Naive thymus-derived CD4-positive, alpha-beta T cell (primary cell): ENCODE measurements at regions of chr20 and their contacts with region 1.

Region 1: DNA sequence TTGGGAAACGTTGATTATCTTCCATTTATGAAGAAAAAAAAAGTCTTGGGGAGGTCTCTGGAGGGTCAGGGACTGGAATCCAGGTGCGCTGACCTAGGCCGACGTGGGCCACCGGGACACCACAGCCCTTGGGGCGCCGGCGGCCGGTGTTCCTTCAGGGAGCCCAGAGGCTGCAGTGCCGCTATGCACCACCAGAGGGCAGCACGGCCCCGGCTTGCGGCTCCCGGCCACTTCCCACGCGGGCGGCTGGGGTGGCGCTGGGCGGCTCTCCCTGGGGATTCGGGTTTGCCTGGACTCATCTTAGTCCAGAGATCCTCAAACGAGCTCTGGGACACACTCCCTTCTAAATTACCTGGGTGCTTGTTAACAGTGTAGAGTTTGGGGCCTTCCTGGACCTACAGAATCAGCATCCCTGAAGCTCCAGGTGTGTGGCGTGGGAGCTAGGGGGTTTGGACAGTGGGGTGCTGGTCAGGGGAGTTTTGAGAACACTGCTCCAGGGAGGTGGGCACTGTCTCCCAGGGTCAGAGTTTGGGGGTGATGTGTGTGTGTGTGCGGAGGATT is 23.0 kb upstream of the GTSF1L start:
- DNase-seq: peak; percentile 50 to 94 (median 72)
- ATAC-seq: peak; percentile 85
- H3K4me3 ChIP-seq: no peak overlapping the region
- H3K4me3 Mint-ChIP-seq: peak overlapping the region in 6 of 10 donors; percentile 29 to 54 (median 46)
- H3K27ac ChIP-seq: no peak overlapping the region
- H3K27ac Mint-ChIP-seq: peak overlapping the region in 6 of 9 donors; percentile 28 to 81 (median 51)
- H3K4me1 ChIP-seq: peaks cover 15 to 18% of the 10 kb centered on the region in 2 donors
- H3K4me1 Mint-ChIP-seq: peaks cover 22 to 44% (median 38%) of the 10 kb centered on the region in 7 donors
- H3K27me3 ChIP-seq: no peaks in the 10 kb centered on the region
- H3K27me3 Mint-ChIP-seq: peaks cover 0 to 18% (median 0%) of the 10 kb centered on the region in 5 donors

Region 2: DNA sequence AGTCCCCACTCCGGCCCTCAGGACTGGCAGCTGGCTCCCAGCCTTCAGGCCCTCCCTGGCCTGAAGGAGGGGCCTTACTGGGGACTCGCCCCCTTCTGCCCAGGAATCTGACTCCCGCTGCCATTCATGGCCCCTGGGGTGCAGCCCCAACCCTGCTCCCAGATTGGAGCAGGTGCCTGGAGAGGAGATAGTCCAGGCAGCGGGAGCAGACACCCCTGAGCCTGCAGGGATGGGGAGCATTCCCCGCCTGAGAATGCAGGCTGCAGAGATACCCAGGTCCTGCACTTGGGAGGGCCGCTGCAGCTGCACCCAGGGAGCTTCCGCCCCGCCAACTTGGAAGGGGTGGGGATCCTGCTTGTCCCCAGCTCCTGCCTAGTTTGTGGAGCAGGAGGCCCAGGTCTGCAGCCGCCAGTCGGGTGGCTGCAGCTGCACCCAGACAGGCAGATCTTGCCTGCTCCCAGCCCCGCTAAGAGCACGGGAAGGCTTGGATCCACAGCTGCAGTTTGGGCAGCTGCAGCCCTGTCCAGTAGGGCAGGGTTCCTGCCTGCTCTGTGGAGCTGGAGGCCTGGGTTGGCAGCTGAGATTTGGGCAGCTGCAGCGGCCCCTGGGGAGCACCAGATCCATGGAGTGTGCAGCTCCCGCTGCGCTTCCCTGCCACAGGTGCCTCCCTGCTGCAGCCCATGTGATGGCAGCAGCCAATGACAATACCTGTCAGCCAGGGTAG is 28.2 kb before region 1 on chr20:
- CTCF ChIA-PET with region 1: interaction called, 5 read pairs
- POLR2A ChIA-PET with region 1: interaction called, 4 read pairs
- intact Hi-C with region 1: loop called in 1 of 2 experiments (anchors 2 kb)
- DNase-seq: no peak
- ATAC-seq: no peak
- H3K4me3 ChIP-seq: peak overlapping the region; percentile 62
- H3K4me3 Mint-ChIP-seq: peak overlapping the region; percentile 62 to 92 (median 79)
- H3K27ac ChIP-seq: peak overlapping the region; percentile 75
- H3K27ac Mint-ChIP-seq: peak overlapping the region; percentile 65 to 95 (median 88)
- H3K4me1 ChIP-seq: peaks cover 0 to 53% of the 10 kb centered on the region in 2 donors
- H3K4me1 Mint-ChIP-seq: peaks cover 13 to 95% (median 70%) of the 10 kb centered on the region in 7 donors
- H3K27me3 ChIP-seq: no peaks in the 10 kb centered on the region
- H3K27me3 Mint-ChIP-seq: no peaks in the 10 kb centered on the region

Region 3: GRCh38 chr20:43914311-43915210 is 164.7 kb after region 1 on chr20 and contains the start of gene TOX2:
- CTCF ChIA-PET with region 1: interaction called, 3 read pairs
- POLR2A ChIA-PET with region 1: no interaction called
- intact Hi-C with region 1: loop called in 1 of 2 experiments (anchors 5 kb)
- DNase-seq: peak; percentile 12 to 59 (median 42)
- ATAC-seq: peak; percentile 86
- H3K4me3 ChIP-seq: peak within 1 kb of the TSS; percentile 57
- H3K4me3 Mint-ChIP-seq: peak within 1 kb of the TSS; percentile 78 to 97 (median 88)
- H3K27ac ChIP-seq: no peak within 1 kb of the TSS
- H3K27ac Mint-ChIP-seq: peak within 1 kb of the TSS in 8 of 9 donors; percentile 70 to 94 (median 78)
- H3K4me1 ChIP-seq: peaks cover 14 to 16% of the 10 kb centered on the region in 2 donors
- H3K4me1 Mint-ChIP-seq: peaks cover 12 to 28% (median 21%) of the 10 kb centered on the region in 7 donors
- H3K27me3 ChIP-seq: peaks cover 0 to 6% of the 10 kb centered on the region in 2 donors
- H3K27me3 Mint-ChIP-seq: peaks cover 26 to 62% (median 34%) of the 10 kb centered on the region in 5 donors
- total RNA-seq, gene TOX2: 0.22 to 7.1 (median 0.96) TPM

Region 4: DNA sequence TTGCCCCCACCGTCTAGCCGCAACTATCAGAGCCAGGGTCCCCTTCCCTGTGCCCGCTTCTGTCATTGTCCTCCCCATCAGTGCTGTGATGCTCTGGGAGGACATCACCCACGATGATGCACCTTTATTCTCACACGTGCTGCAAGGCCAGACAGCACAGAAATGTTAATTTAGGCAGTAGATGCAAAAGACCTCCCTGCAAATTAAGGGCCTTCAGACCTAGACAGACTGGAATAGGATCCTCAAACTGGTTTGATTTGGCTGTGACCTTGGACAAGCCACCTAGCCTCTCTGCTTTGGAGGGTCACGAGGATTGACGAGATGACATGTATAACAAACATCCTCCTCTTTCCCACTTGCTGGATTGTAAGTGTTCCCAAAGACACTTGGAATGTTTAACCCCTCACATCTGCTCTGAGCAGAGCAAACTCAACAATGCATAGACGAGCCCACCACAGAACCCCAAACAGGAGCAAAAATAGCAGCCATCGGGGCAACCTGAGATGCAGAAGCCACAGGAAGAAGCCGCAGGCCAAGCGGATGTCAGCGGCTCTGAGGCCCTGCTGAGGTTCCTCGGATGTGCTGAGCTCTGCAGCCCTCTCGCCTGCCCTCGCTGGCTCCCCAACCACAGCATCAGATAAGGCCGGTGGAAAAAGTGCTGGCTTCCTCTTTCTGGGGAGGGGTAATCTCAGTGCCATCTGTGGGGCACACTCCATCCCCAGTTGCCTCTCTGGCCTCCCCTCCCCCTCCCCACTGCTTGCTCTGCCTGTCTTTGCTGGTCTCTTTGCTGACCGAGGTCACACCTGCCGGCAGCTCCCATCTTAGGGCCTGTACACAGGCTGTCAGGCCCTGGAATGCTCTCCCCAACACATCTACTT is 200.2 kb after region 1 on chr20:
- CTCF ChIA-PET with region 1: no interaction called
- POLR2A ChIA-PET with region 1: no interaction called
- intact Hi-C with region 1: loop called in 1 of 2 experiments (anchors 1 kb)
- DNase-seq: peak; percentile 46 to 74 (median 68)
- ATAC-seq: peak; percentile 96
- H3K4me3 ChIP-seq: peak overlapping the region; percentile 28
- H3K4me3 Mint-ChIP-seq: peak overlapping the region; percentile 42 to 83 (median 76)
- H3K27ac ChIP-seq: no peak overlapping the region
- H3K27ac Mint-ChIP-seq: peak overlapping the region; percentile 5 to 84 (median 61)
- H3K4me1 ChIP-seq: peaks cover 63 to 65% of the 10 kb centered on the region in 2 donors
- H3K4me1 Mint-ChIP-seq: peaks cover 71 to 95% (median 84%) of the 10 kb centered on the region in 7 donors
- H3K27me3 ChIP-seq: peaks cover 0 to 5% of the 10 kb centered on the region in 2 donors
- H3K27me3 Mint-ChIP-seq: peaks cover 0 to 55% (median 4%) of the 10 kb centered on the region in 5 donors

Region 5: GRCh38 chr20:44038681-44039123 is 288.9 kb after region 1 on chr20:
- CTCF ChIA-PET with region 1: no interaction called
- POLR2A ChIA-PET with region 1: no interaction called
- intact Hi-C with region 1: no loop called
- DNase-seq: no peak
- ATAC-seq: no peak
- H3K4me3 ChIP-seq: no peak overlapping the region
- H3K4me3 Mint-ChIP-seq: no peak overlapping the region
- H3K27ac ChIP-seq: no peak overlapping the region
- H3K27ac Mint-ChIP-seq: no peak overlapping the region
- H3K4me1 ChIP-seq: no peaks in the 10 kb centered on the region
- H3K4me1 Mint-ChIP-seq: peaks cover 8 to 24% (median 16%) of the 10 kb centered on the region in 7 donors
- H3K27me3 ChIP-seq: no peaks in the 10 kb centered on the region
- H3K27me3 Mint-ChIP-seq: peaks cover 4 to 75% (median 13%) of the 10 kb centered on the region in 5 donors

Region 6: GRCh38 chr20:44056010-44056698 is 306.3 kb after region 1 on chr20:
- CTCF ChIA-PET with region 1: interaction called, 3 read pairs
- POLR2A ChIA-PET with region 1: no interaction called
- intact Hi-C with region 1: loop called in 1 of 2 experiments (anchors 1 kb)
- DNase-seq: peak in 8 of 9 donors; percentile 41 to 83 (median 74)
- ATAC-seq: peak; percentile 96
- H3K4me3 ChIP-seq: no peak overlapping the region
- H3K4me3 Mint-ChIP-seq: no peak overlapping the region
- H3K27ac ChIP-seq: no peak overlapping the region
- H3K27ac Mint-ChIP-seq: peak overlapping the region in 7 of 9 donors; percentile 6 to 85 (median 33)
- H3K4me1 ChIP-seq: peaks cover 0 to 9% of the 10 kb centered on the region in 2 donors
- H3K4me1 Mint-ChIP-seq: peaks cover 10 to 49% (median 30%) of the 10 kb centered on the region in 7 donors
- H3K27me3 ChIP-seq: no peaks in the 10 kb centered on the region
- H3K27me3 Mint-ChIP-seq: peaks cover 0 to 19% (median 0%) of the 10 kb centered on the region in 5 donors

Region 7: GRCh38 chr20:44187051-44187762 is 437.4 kb after region 1 on chr20 and contains the start of gene JPH2:
- CTCF ChIA-PET with region 1: interaction called, 4 read pairs
- POLR2A ChIA-PET with region 1: no interaction called
- intact Hi-C with region 1: loop called in 1 of 2 experiments (anchors 1 kb)
- DNase-seq: no peak
- ATAC-seq: no peak
- H3K4me3 ChIP-seq: no peak within 1 kb of the TSS
- H3K4me3 Mint-ChIP-seq: peak within 1 kb of the TSS in 9 of 10 donors; percentile 38 to 75 (median 47)
- H3K27ac ChIP-seq: no peak within 1 kb of the TSS
- H3K27ac Mint-ChIP-seq: no peak within 1 kb of the TSS
- H3K4me1 ChIP-seq: peaks cover 0 to 11% of the 10 kb centered on the region in 2 donors
- H3K4me1 Mint-ChIP-seq: peaks cover 4 to 19% (median 12%) of the 10 kb centered on the region in 7 donors
- H3K27me3 ChIP-seq: peaks cover 0 to 12% of the 10 kb centered on the region in 2 donors
- H3K27me3 Mint-ChIP-seq: peaks cover 55 to 71% (median 66%) of the 10 kb centered on the region in 5 donors
- total RNA-seq, gene JPH2: 0.07 to 0.17 TPM in 2 of 5 experiments, not detected in the others